ENCODE measurements at regions of chr15 and their contacts with region 1.

Region 1: DNA sequence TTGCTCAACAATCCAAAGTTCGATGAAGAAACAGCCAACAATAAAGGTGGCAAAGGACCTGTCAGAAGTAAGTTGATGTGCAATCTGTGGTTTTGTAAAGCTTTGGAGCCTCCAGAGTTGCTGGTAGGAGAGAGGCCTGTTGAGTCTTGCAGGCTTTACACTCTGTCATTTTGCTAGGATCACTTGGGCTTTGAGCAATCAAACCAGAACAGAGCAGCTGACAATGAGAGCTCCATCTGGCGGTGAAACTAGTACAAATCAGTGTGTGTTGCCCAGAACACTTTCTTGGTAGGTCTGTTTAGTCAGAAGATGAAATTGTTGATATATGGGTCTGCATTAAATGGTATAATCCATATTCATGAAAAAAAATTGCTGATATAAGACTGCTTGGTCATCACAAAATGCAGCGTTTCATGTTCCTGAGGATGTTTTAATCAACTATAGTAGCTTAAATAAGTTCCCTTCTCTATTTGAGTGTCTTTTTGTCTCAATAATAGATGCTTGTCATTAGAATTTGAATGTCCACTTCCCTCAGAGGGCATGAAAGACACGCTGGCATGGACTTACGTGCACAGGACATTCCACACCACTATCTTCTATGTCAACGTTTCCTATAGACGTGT is 25.7 kb downstream of the TMOD2 start:
- DNase-seq: peak; percentile 80
- ATAC-seq: peak; percentile 73
- H3K4me3 Mint-ChIP-seq: no peak overlapping the region
- H3K27ac Mint-ChIP-seq: no peak overlapping the region
- H3K4me1 Mint-ChIP-seq: peaks cover 9% of the 10 kb centered on the region
- H3K27me3 Mint-ChIP-seq: no peaks in the 10 kb centered on the region

Region 2: DNA sequence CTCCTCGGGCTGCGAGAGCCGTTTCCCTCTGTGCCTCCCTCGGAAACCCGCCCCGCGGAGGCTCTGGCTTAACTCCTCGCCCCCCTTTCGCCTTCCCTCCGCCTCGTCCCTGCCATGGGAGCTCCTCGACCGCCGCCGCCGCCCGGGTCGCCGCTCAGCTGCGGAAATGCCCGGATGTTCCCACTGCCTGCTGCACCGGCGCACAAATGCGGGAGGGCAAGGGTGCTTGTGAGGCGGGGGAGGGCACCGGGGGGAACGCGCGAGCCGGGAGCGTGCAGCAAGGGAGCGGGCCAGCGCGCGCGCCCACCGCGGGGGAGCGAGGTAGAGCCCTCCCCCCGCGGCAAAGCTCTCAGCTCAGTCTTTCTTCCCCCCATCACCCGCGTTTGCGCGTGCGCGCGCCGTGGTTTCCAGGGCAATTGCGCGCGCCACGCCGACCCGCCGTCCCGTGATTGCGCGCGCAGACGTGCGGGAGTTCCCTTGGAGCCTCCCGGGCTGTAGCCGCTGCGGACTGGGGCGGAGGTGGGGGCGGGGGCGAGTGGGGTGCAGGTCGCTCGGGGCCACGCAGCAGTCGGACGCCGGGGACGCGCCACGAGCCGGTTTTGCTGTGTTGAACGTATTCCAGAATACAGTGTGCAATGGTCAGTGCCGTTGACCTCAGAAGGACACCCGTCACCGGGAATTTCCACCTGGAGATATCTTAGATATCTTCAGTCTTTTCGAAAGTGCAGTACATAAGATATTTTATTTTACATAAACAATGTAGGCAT is 154.3 kb before region 1 on chr15 and contains the start of gene DMXL2:
- CTCF ChIA-PET with region 1: interaction called, 27 read pairs
- POLR2A ChIA-PET with region 1: no interaction called
- DNase-seq: peak; percentile 76
- ATAC-seq: peak; percentile 74
- H3K4me3 Mint-ChIP-seq: peak within 1 kb of the TSS; percentile 82
- H3K27ac Mint-ChIP-seq: peak within 1 kb of the TSS; percentile 56
- H3K4me1 Mint-ChIP-seq: peaks cover 15% of the 10 kb centered on the region
- H3K27me3 Mint-ChIP-seq: peaks cover 42% of the 10 kb centered on the region
- total RNA-seq, gene DMXL2: 6.8 to 9.2 TPM

Region 3: DNA sequence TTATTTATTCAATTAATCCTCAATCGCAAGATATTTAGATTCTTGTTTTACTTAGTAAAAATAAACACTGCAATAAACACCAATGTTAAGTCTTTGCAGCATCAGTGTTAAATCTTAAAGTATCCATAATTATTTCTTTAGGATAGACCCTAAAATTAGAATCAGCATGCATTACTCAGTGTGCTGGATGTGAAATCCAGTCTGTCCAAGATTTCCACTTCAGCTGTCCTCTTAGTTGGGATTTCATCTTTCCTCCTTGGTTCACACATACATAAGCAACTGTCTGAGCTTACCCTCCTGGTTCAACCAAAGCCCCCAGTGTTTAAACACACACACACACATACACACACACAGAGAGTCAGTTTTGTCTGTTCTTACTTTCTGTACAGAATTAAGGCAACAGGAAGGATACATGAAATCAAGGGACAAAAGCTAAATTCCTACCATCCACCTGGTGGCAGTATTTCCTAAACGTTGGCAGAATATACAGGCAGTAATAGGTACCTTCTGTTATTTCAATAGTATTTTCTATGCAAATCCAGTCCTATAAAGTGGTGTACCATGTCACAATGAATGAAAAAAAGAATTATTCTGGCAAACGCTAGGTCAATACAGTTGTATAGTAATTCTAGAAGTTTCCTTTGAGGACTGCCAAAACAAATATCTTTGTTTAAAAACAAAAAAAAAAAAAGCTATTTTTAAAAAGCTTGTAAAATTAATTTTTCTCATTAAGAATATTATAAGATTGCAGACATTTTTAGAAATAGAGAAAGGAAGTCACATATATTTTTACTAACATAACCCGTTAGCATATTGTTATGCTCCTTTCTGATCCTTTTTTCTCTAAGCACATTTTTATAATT is 127.2 kb before region 1 on chr15:
- CTCF ChIA-PET with region 1: interaction called, 164 read pairs
- POLR2A ChIA-PET with region 1: interaction called, 4 read pairs
- DNase-seq: peak; percentile 72
- ATAC-seq: peak; percentile 83
- H3K4me3 Mint-ChIP-seq: no peak overlapping the region
- H3K27ac Mint-ChIP-seq: no peak overlapping the region
- H3K4me1 Mint-ChIP-seq: peaks cover 6% of the 10 kb centered on the region
- H3K27me3 Mint-ChIP-seq: peaks cover 9% of the 10 kb centered on the region

Region 4: GRCh38 chr15:51708013-51708412 is 69.0 kb before region 1 on chr15:
- CTCF ChIA-PET with region 1: interaction called, 10 read pairs
- POLR2A ChIA-PET with region 1: no interaction called
- DNase-seq: no peak
- ATAC-seq: no peak
- H3K4me3 Mint-ChIP-seq: no peak overlapping the region
- H3K27ac Mint-ChIP-seq: no peak overlapping the region
- H3K4me1 Mint-ChIP-seq: no peaks in the 10 kb centered on the region
- H3K27me3 Mint-ChIP-seq: peaks cover 5% of the 10 kb centered on the region

Region 5: DNA sequence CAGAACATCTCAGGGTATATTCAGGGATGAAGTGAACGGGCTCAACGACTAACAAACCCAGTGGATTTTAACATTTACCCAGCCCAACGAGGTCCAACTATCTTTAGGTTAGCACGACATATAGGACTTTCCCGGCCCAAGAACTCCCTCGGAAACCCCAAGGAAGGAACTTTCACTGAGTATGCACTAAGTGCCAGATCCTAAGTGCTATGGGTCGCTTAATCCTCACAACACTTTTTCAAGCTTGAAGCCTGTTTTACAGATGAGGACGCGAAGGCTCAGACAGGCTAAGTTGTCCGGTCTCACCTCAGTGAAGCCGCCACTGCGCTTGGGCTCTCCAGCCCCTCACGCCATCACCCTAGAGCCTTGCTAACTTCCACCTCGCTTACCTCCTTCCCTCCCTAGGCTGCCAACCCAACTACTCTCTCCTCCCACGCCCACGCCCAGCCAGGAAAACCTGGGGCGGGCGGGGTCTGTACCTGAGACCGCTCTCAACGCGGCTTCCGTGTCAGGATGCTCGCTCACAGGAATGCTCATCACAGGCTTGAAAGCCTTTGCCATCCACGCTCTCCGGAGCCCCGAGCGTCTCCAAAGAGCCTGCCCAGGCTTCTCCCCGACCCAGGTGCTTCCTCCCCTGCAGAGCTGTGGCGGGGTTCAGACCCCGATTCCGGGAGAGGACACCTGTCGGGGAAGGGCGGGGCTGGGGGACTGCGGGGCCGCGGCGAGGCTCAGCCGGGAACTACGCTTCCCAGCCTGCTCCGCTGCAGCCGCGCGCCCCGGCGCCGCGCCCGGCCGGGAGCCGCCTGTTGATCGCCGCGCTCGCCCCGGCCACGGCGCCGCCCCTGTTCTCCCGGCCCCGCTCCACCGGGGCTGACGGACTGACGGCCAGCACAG is 26.0 kb before region 1 on chr15 and contains the start of gene TMOD2:
- CTCF ChIA-PET with region 1: interaction called, 32 read pairs
- POLR2A ChIA-PET with region 1: no interaction called
- DNase-seq: peak; percentile 51
- ATAC-seq: peak; percentile 92
- H3K4me3 Mint-ChIP-seq: peak within 1 kb of the TSS; percentile 83
- H3K27ac Mint-ChIP-seq: peak within 1 kb of the TSS; percentile 51
- H3K4me1 Mint-ChIP-seq: peaks cover 46% of the 10 kb centered on the region
- H3K27me3 Mint-ChIP-seq: peaks cover 27% of the 10 kb centered on the region
- total RNA-seq, gene TMOD2: 12.0 to 12.5 TPM

Region 6: DNA sequence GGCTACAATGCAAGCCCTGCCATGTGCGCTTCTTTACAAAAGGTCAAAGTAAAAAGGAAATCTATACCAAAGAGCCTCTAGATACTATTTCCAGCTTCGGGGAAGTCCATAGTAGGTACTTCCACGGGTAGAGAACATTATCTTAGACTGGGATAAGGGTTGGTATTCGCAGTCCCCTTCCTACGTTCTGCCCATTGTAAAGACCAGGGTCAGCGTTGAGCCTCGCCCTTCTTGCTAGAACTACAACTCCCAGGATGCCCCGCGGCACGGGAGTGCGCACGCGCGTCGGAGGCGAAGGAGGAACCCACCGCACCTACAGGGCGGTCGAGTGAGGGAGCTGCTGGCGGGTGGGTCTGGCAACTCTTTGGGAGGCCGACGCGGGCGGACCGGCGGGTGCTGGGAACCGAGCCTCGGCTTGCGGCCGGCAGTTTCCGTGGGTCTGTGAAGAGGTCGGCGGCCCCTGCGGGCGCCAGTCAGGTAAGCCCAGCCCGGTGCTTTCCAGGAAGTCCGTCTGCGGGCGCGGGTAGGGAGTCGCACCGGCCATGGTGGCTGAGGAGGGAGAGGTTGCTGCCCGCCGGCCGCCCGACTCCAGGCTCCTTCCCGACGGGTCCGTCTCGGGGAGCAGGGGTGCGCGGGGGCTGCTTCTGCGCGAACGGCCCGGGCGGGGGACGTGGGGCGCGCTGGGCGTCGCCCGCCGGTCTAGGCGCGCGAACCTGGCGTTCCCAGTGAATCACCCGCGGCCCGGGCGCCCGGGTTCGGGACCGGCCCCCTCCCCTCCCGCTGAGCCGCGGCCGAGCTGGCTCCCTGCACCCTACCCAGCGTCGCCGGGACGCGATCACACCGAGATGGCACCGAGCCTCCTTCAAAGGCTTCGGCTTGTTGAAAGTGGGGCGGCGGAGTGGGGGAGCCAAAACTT is 52.6 kb after region 1 on chr15 and contains the start of gene TMOD3:
- CTCF ChIA-PET with region 1: interaction called, 12 read pairs
- POLR2A ChIA-PET with region 1: no interaction called
- DNase-seq: peak; percentile 92
- ATAC-seq: peak; percentile 88
- H3K4me3 Mint-ChIP-seq: peak within 1 kb of the TSS; percentile 98
- H3K27ac Mint-ChIP-seq: peak within 1 kb of the TSS; percentile 95
- H3K4me1 Mint-ChIP-seq: peaks cover 39% of the 10 kb centered on the region
- H3K27me3 Mint-ChIP-seq: peaks cover 11% of the 10 kb centered on the region
- total RNA-seq, gene TMOD3: 73.8 to 74.1 TPM

Region 7: GRCh38 chr15:52406601-52407000 is 629.5 kb after region 1 on chr15:
- CTCF ChIA-PET with region 1: no interaction called
- POLR2A ChIA-PET with region 1: no interaction called
- DNase-seq: no peak
- ATAC-seq: no peak
- H3K4me3 Mint-ChIP-seq: no peak overlapping the region
- H3K27ac Mint-ChIP-seq: no peak overlapping the region
- H3K4me1 Mint-ChIP-seq: no peaks in the 10 kb centered on the region
- H3K27me3 Mint-ChIP-seq: no peaks in the 10 kb centered on the region